ENCODE measurements at regions of chr3 and their contacts with region 1.

Region 1: GRCh38 chr3:16280671-16281070 is 15.7 kb downstream of the OXNAD1 start:
- DNase-seq: no peak
- H3K4me3 ChIP-seq: no peak overlapping the region
- H3K27ac ChIP-seq: no peak overlapping the region; a peak in 1 of 4 replicates
- H3K4me1 ChIP-seq: no peaks in the 10 kb centered on the region
- H3K27me3 ChIP-seq: no peaks in the 10 kb centered on the region
- CTCF ChIP-seq: no peak
- EP300 ChIP-seq: no peak
- RAD21 ChIP-seq: no peak

Region 2: GRCh38 chr3:16140116-16140893 is 140.4 kb before region 1 on chr3:
- CTCF ChIA-PET with region 1: no interaction called
- POLR2A ChIA-PET with region 1: no interaction called
- DNase-seq: no peak
- H3K4me3 ChIP-seq: no peak overlapping the region
- H3K27ac ChIP-seq: peak overlapping the region in 1 of 2 experiments; percentile 66; a peak in 2 of 4 replicates
- H3K4me1 ChIP-seq: peaks cover 0 to 13% of the 10 kb centered on the region in 2 experiments; a peak in 1 of 4 replicates
- H3K27me3 ChIP-seq: no peaks in the 10 kb centered on the region
- CTCF ChIP-seq: no peak
- EP300 ChIP-seq: 0 out of 4 replicates have a peak, but pooled peaks of 1 of the 2 experiments have one; percentile 18
- RAD21 ChIP-seq: no peak

Region 3: DNA sequence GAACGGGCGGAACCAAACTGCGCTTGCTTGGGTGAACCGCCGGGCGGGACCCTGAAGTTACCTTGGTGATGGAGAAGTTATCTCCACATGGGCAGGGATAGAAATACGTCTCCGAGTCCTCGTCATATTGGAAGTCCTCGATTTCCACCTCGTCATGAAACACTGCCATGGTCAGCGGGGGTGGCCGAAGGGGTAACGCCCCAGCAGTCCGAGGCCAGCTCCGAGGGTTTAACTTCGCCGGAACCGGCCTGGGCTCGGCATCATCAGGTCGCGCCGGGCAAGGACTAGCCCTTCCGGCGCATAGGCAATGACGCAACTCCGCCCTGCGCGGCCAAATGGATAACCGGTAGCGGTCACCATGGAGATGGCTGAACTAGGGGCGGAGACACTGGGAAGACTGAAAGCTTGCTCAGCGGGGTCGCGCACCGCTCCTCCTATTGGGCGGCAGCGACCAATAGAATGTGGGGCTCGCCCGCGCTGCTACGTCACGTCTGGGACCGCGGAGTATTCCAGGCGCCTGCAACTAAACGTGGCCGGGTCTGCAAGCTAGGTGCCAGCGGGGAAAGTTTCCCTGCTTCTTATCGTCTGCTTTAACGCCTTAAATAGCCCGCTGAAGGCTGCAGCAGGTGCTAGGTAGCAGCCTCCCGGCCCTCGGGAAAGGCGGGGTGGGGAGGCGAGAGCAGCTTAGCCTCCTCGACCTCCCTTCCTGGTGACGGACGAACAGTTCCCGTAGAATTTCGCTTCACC is 15.8 kb before region 1 on chr3 and contains the starts of genes DPH3 and OXNAD1:
- CTCF ChIA-PET with region 1: interaction called, 20 read pairs
- POLR2A ChIA-PET with region 1: interaction called, 3 read pairs
- DNase-seq: peak; percentile 93
- H3K4me3 ChIP-seq: peak within 1 kb of the TSS; percentile 83 to 86
- H3K27ac ChIP-seq: peak within 1 kb of the TSS; percentile 83 to 86
- H3K4me1 ChIP-seq: peaks cover 5 to 17% of the 10 kb centered on the region in 2 experiments
- H3K27me3 ChIP-seq: no peaks in the 10 kb centered on the region
- CTCF ChIP-seq: no peak
- EP300 ChIP-seq: no peak
- RAD21 ChIP-seq: no peak
- polyA plus RNA-seq, gene DPH3: 8.5 and 10.8 TPM in 2 replicates
- polyA plus RNA-seq, gene OXNAD1: 6.9 and 10.0 TPM in 2 replicates